ENCODE measurements at regions of chr3 and their contacts with region 1.

Region 1: GRCh38 chr3:191328962-191329653 is at the start of gene CCDC50:
- DNase-seq: peak; percentile 72
- ATAC-seq: peak; percentile 74
- H3K4me3 ChIP-seq: peak within 1 kb of the TSS; percentile 86
- H3K27ac ChIP-seq: peak within 1 kb of the TSS; percentile 100
- H3K4me1 ChIP-seq: peaks cover 18% of the 10 kb centered on the region
- H3K27me3 ChIP-seq: no peaks in the 10 kb centered on the region
- CTCF ChIP-seq: no peak
- POLR2A ChIP-seq: no peak; the same call in 1 of the 2 replicates
- RAD21 ChIP-seq: no peak
- total RNA-seq, gene CCDC50: 63.1 and 110 TPM in 2 replicates

Region 2: GRCh38 chr3:191070201-191070600 is 258.9 kb before region 1 on chr3:
- CTCF ChIA-PET with region 1: no interaction called
- POLR2A ChIA-PET with region 1: no interaction called
- dilution Hi-C with region 1: no loop called
- in situ Hi-C with region 1: no loop called
- intact Hi-C with region 1: loop called (anchors 5 kb)
- DNase-seq: peak; percentile 95
- ATAC-seq: peak; percentile 88
- H3K4me3 ChIP-seq: no peak overlapping the region
- H3K27ac ChIP-seq: peak overlapping the region; percentile 61; the same call in 1 of the 2 replicates
- H3K4me1 ChIP-seq: peaks cover 17% of the 10 kb centered on the region; the same call in 1 of the 2 replicates
- H3K27me3 ChIP-seq: no peaks in the 10 kb centered on the region
- CTCF ChIP-seq: no peak
- POLR2A ChIP-seq: no peak
- RAD21 ChIP-seq: no peak

Region 3: GRCh38 chr3:191235331-191236314 is 93.5 kb before region 1 on chr3:
- CTCF ChIA-PET with region 1: no interaction called
- POLR2A ChIA-PET with region 1: interaction called, 3 read pairs
- dilution Hi-C with region 1: no loop called
- in situ Hi-C with region 1: no loop called
- intact Hi-C with region 1: loop called (anchors 2 kb)
- DNase-seq: peak; percentile 63
- ATAC-seq: peak; percentile 59
- H3K4me3 ChIP-seq: no peak overlapping the region; the same call in 1 of the 2 replicates
- H3K27ac ChIP-seq: peak overlapping the region; percentile 93
- H3K4me1 ChIP-seq: peaks cover 25% of the 10 kb centered on the region
- H3K27me3 ChIP-seq: no peaks in the 10 kb centered on the region
- CTCF ChIP-seq: no peak
- POLR2A ChIP-seq: no peak
- RAD21 ChIP-seq: no peak

Region 4: GRCh38 chr3:191316876-191317603 is 12.1 kb before region 1 on chr3:
- CTCF ChIA-PET with region 1: no interaction called
- POLR2A ChIA-PET with region 1: no interaction called
- dilution Hi-C with region 1: no loop called
- in situ Hi-C with region 1: no loop called
- intact Hi-C with region 1: no loop called
- DNase-seq: no peak
- ATAC-seq: no peak
- H3K4me3 ChIP-seq: no peak overlapping the region
- H3K27ac ChIP-seq: no peak overlapping the region
- H3K4me1 ChIP-seq: no peaks in the 10 kb centered on the region
- H3K27me3 ChIP-seq: no peaks in the 10 kb centered on the region
- CTCF ChIP-seq: no peak
- POLR2A ChIP-seq: no peak
- RAD21 ChIP-seq: no peak

Region 5: GRCh38 chr3:191388823-191389222 is 59.7 kb after region 1 on chr3:
- CTCF ChIA-PET with region 1: no interaction called
- POLR2A ChIA-PET with region 1: no interaction called
- dilution Hi-C with region 1: no loop called
- in situ Hi-C with region 1: no loop called
- intact Hi-C with region 1: loop called (anchors 2 kb)
- DNase-seq: no peak
- ATAC-seq: no peak
- H3K4me3 ChIP-seq: no peak overlapping the region
- H3K27ac ChIP-seq: no peak overlapping the region
- H3K4me1 ChIP-seq: peaks cover 5% of the 10 kb centered on the region
- H3K27me3 ChIP-seq: no peaks in the 10 kb centered on the region
- CTCF ChIP-seq: peak; percentile 29; the same call in 1 of the 2 replicates
- POLR2A ChIP-seq: no peak
- RAD21 ChIP-seq: 0 out of 2 replicates have a peak, but pooled peaks have one; percentile 13

Region 6: DNA sequence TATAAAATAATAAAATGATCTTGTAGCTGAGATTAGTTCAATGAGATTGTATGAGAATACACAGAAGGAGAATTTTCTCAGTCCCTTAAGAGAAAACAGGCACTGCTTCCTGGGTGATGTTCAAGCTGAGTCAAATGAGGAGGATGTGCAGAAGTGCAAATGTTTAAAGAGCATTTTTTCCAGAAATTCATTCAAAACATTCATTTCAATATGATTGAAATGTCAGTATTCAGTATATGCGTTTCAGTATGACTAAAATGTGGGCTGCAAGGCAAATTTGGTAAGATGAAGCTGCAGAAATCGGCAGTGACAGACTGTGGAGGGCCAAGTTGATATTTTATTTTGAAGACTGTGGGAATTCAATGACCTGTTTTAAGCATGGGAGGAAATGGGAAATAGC is 112.6 kb after region 1 on chr3:
- CTCF ChIA-PET with region 1: no interaction called
- POLR2A ChIA-PET with region 1: no interaction called
- dilution Hi-C with region 1: no loop called
- in situ Hi-C with region 1: no loop called
- intact Hi-C with region 1: no loop called
- DNase-seq: no peak
- ATAC-seq: no peak
- H3K4me3 ChIP-seq: no peak overlapping the region
- H3K27ac ChIP-seq: no peak overlapping the region
- H3K4me1 ChIP-seq: no peaks in the 10 kb centered on the region
- H3K27me3 ChIP-seq: no peaks in the 10 kb centered on the region
- CTCF ChIP-seq: no peak
- POLR2A ChIP-seq: no peak
- RAD21 ChIP-seq: no peak

Region 7: DNA sequence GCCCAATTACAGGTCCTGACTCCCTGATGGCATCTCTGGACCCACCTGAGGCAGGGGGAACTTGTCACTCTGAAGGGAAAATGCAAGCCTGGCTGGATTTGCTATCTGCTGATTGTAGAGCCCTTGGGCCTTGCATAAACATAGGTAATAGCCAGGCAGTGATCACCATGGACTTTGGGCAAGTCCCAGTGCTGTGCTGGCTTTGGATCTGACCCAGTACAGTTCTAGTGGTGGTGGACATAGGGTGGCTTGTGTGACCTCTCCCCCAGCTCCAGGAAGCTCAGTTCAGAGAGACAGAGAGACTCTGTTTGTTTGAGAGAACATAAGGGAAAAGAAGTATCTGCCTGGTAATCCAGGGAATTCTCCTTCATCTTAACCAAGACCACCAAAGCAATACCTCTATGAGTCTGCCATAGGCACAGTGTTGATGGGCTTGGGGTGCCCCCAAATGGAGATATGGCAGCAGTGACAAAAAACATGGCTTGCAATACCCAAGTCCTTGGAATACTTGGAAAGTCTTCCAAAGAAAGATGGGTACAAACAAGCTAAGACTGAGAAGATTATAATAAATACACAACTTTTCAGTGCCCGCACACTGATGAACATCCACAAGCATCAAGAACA is 480.3 kb after region 1 on chr3:
- CTCF ChIA-PET with region 1: no interaction called
- POLR2A ChIA-PET with region 1: no interaction called
- dilution Hi-C with region 1: no loop called
- in situ Hi-C with region 1: no loop called
- intact Hi-C with region 1: no loop called
- DNase-seq: no peak
- ATAC-seq: no peak
- H3K4me3 ChIP-seq: no peak overlapping the region
- H3K27ac ChIP-seq: no peak overlapping the region
- H3K4me1 ChIP-seq: no peaks in the 10 kb centered on the region
- H3K27me3 ChIP-seq: no peaks in the 10 kb centered on the region
- CTCF ChIP-seq: no peak
- POLR2A ChIP-seq: no peak
- RAD21 ChIP-seq: no peak